AG04450 (cell line): ENCODE measurements at regions of chr4 and their contacts with region 1.

Region 1: GRCh38 chr4:11312389-11312788 is 116.3 kb downstream of the HS3ST1 start:
- DNase-seq: no peak
- H3K4me3 ChIP-seq: no peak overlapping the region
- H3K27ac ChIP-seq: no peak overlapping the region
- H3K27me3 ChIP-seq: no peaks in the 10 kb centered on the region
- CTCF ChIP-seq: no peak

Region 2: GRCh38 chr4:11218692-11219091 is 93.7 kb before region 1 on chr4:
- CTCF ChIA-PET with region 1: interaction called, 11 read pairs
- POLR2A ChIA-PET with region 1: no interaction called
- DNase-seq: no peak
- H3K4me3 ChIP-seq: no peak overlapping the region
- H3K27ac ChIP-seq: no peak overlapping the region
- H3K27me3 ChIP-seq: no peaks in the 10 kb centered on the region
- CTCF ChIP-seq: no peak